ENCODE measurements at regions of chr3 and their contacts with region 1.

Region 1: DNA sequence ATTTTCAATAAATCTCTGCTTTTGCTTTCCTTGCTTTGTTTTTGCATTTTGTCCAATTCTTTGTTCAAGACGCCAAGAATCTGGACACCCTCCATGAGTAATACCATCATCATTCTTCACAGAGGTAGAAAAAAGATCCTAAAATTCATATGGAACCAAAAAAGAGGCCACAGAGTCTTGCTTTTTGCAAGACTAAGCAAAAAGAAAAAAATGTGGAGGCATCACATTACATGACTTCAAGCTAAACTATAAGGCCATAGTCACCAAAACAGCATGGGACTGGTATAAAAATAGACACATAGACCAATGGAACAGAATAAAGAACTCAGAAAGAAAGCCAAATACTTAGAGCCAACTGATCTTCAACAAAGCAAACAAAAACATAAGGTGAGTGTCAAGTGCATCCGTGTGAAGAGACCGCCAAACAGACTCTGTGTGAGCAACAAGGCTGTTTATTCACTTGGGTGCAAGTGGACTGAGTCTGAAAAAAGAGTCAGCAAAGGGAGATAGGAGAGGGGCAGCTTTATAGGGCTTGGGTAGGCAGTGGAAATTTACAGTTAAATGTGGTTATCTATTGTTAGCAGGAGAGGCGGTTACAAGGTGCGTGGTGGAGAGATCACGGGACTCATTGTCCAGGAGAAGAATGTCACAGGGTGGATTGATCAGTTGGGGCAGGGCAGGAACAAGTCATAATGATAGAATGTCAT is 10.9 kb downstream of the STRIT1 start:
- DNase-seq: peak; percentile 67
- H3K4me3 Mint-ChIP-seq: no peak overlapping the region
- H3K27ac Mint-ChIP-seq: no peak overlapping the region
- H3K4me1 Mint-ChIP-seq: no peaks in the 10 kb centered on the region
- H3K27me3 Mint-ChIP-seq: no peaks in the 10 kb centered on the region
- CTCF ChIP-seq: no peak

Region 2: GRCh38 chr3:155313300-155313699 is 30.8 kb after region 1 on chr3:
- CTCF ChIA-PET with region 1: interaction called, 3 read pairs
- intact Hi-C with region 1: loop called (anchors 2 kb)
- DNase-seq: no peak
- H3K4me3 Mint-ChIP-seq: no peak overlapping the region
- H3K27ac Mint-ChIP-seq: peak overlapping the region; percentile 97
- H3K4me1 Mint-ChIP-seq: peaks cover 31% of the 10 kb centered on the region
- H3K27me3 Mint-ChIP-seq: no peaks in the 10 kb centered on the region
- CTCF ChIP-seq: no peak

Region 3: DNA sequence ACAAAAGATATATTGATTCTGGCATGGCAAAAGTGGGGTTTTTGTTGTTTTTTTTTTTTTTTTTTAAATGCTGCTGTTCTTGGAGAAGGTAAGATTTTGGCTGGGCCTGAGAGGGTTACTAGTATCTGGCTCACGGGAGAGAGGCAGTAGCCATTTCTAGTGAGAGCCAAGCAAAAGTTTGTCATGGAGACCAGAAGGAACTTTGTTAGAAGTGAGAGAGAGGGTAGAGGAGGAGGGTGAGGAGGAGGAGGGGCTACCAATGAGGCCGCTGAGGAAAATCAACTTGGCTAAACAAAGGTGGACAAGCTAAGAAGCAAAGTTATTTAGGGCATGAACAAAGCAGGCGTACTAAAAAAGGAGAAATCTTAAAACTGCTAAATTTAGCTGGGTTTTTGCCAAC is 59.8 kb after region 1 on chr3:
- CTCF ChIA-PET with region 1: no interaction called
- intact Hi-C with region 1: no loop called
- DNase-seq: no peak
- H3K4me3 Mint-ChIP-seq: no peak overlapping the region
- H3K27ac Mint-ChIP-seq: no peak overlapping the region
- H3K4me1 Mint-ChIP-seq: no peaks in the 10 kb centered on the region
- H3K27me3 Mint-ChIP-seq: no peaks in the 10 kb centered on the region
- CTCF ChIP-seq: no peak